Ovary (tissue), 10 donors: ENCODE measurements at regions of chr6 and their contacts with region 1.

Region 1: DNA sequence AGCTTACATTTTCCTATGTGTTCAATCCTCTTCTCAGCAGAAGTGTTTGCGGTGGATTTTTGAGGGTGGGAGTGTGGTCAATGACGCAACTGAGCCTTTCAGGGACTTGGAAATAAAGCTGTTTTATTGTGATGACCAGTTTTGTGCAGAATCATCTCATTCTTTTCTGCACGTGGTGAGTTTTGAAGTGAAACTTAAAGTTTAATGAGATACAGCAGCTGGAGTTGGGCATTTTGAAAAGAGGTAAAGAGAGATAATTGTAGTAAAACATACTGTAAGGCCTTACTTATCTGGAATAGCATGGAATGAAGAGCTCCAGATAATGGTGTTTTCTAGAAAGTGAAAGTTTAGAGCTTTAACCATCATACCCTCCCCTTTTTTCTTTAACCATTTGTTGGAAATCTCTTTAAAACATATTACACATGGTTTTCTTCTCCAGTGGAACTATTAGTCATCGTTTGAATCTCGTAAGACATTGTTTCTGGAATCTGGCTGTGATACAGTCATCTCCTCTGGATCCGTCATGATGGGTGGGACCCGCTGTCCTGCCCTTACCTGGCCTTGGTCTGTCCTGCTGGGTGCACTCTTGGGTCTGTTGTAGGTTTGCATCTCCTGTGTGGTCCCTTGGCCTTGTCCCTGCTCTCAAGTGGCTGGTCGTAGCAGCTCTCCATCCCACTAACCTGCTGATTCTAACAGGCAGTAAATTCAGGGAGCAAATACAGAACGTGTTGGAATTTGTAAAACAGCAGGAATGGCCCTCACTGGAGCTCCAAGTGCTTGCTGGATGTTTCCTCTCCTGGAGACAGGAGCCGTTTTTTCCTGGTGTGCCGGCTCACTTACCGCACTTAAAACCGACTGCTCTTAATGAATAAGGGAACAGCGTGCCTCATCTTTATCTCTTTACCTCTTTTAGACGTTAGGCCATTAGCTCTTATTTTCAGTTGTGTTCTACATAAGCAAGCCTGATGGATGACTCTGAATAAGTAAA is 29.8 kb downstream of the UST start:
- DNase-seq: peak in 1 of 5 donors; percentile 24
- H3K4me3 ChIP-seq: no peak overlapping the region
- H3K27ac ChIP-seq: peak overlapping the region in 1 of 2 donors; percentile 8
- H3K4me1 ChIP-seq: peaks cover 10% of the 10 kb centered on the region
- H3K27me3 ChIP-seq: no peaks in the 10 kb centered on the region
- CTCF ChIP-seq: no peak
- EP300 ChIP-seq: no peak
- POLR2A ChIP-seq: no peak

Region 2: DNA sequence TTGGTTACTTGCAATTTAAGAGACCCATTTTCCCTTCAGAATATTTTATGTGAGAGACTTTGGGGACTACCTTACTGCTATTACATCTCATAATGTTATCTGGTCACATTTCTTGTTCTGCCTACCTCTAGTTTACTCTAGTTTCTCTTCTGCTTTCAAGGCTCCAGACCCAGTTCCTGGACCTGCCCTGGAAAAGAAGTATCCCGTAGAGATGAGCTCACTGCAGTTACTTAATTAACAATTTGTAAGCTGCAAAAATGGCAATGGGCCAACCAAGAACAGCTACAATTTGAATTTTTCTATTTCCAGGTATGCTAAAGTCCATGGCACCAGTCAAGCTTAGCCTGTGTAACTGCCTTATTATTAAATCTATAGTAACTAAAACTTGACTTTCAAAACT is 565.9 kb after region 1 on chr6:
- intact Hi-C with region 1: loop called in 1 of 4 experiments (anchors 10 kb)
- DNase-seq: no peak
- H3K4me3 ChIP-seq: no peak overlapping the region
- H3K27ac ChIP-seq: no peak overlapping the region
- H3K4me1 ChIP-seq: peaks cover 5% of the 10 kb centered on the region
- H3K27me3 ChIP-seq: no peaks in the 10 kb centered on the region
- CTCF ChIP-seq: no peak
- EP300 ChIP-seq: no peak
- POLR2A ChIP-seq: no peak